ENCODE measurements at regions of chr11 and their contacts with region 1.

Region 1: GRCh38 chr11:75022759-75023396 is 34.1 kb downstream of the NEU3 start:
- DNase-seq: peak; percentile 89

Region 2: GRCh38 chr11:74929431-74930363 is 93.2 kb before region 1 on chr11:
- intact Hi-C with region 1: loop called in 1 of 2 experiments (anchors 10 kb)
- DNase-seq: no peak

Region 3: DNA sequence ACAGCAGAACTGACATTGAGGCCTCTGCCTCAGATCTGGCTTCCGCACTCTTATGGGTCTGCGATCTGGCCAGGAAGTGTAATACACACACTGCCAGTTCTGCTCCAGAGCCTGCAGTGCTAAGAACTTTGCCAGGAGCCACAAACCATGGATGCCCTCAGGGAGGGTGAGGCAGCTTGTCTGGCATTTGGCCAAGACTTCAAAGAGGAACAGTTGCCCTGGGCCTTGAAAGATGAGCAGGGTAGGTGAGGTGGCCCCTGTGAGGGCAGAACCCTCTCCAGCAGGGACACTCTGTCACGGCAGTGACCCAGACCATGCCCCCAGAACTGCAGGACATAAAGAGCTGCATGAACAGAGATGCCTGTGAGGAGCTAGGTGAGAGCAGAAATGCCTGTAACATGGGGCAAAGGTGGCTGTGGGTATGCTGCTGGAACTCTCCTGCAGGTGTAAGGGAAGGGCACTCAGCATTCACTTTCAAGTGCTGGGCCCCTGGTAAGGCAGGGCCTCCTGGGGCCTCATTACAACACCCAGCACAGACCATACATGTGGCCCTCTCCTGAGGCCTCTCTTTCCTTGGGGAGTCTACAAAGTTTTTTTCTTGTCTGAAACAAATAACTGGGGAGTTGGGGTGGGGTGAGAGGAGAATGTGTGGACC is 13.2 kb after region 1 on chr11:
- intact Hi-C with region 1: no loop called
- DNase-seq: no peak

Region 4: GRCh38 chr11:75241036-75241905 is 218.4 kb after region 1 on chr11:
- intact Hi-C with region 1: loop called in 1 of 2 experiments (anchors 10 kb)
- DNase-seq: peak; percentile 96

Region 5: DNA sequence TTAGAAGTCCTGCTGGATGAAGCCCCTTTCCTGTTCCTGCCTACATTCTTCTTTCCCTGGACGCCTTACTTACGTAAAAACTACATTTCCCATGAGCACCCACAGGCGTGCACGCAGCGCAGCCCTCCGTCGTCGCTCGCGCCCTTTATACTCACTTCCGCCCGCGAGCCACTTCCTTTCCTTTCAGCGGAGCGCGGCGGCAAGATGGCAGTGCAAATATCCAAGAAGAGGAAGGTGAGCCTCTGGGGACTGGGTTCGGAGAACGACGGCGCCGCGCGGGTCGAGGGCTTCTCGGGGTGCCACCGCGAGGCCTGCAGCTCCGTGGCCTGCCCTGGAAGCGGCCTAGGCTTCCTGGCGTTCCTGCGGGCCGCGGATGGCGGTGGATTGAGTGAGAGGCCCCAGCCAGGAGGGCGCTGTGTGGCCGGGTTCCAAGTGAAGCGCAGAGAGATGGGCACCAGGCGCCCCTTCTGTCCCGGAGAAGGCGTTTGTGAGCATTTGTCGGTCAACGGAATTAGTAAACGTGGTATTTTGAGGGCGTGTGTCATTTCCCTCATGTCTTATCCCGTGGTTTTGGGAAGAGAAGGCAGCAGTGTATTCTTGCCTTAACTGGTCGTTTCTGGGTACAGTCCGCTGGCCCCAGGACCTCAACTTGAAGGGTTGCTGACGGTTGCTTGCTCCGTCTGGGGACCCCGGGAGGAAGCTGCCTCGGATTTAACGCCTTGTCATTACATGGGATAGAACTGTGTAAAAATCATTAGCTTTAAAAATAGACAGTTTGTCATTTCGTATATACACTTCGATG is 376.7 kb after region 1 on chr11 and contains the start of gene RPS3:
- intact Hi-C with region 1: loop called in 1 of 2 experiments (anchors 10 kb)
- DNase-seq: peak; percentile 98
- total RNA-seq, gene RPS3: 1,304 to 1,399 TPM